Left ventricle myocardium inferior (tissue), 1 donor: ENCODE measurements at regions of chr1 and their contacts with region 1.

Region 1: DNA sequence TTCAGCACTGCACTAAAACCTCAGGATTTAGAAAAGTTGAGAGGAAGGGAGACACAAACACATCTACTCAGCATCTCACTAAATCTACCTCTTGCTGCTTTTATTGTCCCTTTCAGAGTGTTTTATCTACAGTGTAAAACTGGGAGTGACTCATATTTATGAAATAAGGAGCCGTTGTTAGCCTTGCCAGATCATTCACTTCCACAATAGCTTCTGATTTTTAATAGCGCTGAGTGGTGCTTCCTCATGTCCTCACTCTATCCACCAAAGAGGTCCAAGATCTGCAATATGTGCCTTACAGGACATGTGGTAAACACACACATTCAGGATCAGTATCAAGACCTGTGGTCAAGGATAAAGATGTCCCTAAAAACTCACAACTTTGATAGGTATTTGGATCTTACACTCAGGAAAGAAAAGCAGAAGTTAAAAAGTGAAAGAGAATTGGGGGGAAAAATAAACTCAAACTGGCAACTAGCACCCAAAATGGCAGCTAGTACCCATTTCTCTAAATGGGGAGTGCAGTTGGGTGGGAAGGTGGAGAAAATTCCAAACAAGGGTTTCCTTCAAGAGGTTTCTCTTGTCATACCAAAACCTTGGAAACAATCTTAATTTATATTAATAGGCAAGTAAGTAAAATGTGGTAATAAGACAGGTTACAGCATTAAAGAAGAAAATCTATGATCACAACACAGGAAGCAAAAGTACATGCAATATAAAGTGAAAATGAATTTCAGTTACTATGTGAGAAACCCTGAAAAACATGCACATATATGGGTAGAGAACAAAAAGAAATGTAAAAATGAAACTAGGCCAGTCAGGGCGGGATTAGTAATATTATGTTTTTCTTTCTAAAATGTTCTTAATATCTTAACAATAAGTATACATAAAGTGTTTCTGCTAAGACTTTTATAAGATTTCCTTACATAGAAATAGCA is 15.9 kb downstream of the DUSP10 start:
- DNase-seq: no peak
- H3K4me3 ChIP-seq: no peak overlapping the region
- H3K27ac ChIP-seq: peak overlapping the region; percentile 33
- H3K4me1 ChIP-seq: peaks cover 71% of the 10 kb centered on the region
- H3K27me3 ChIP-seq: no peaks in the 10 kb centered on the region
- CTCF ChIP-seq: no peak

Region 2: DNA sequence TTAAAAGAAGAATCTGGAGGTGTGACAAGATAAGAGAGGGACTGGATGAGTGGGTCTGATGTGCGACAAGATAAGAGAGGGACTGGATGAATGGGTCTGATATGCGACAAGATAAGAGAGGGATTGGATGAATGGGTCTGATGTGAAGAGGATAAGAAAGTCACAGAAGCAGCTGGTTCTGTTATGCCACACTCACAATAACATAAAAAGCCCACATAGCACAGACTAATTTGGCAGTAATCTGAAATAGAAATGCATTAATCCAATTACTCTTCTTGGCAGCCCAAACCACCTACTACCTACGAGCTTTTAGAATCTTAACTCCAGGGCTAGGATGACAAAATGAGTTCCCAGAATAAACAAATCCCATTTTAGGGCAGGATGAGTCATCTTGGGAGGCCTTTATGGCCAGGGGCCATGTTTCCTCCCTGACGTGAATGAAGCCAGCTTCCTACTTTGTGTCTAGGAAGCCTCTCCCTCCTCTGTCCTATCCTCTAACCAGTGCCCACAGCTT is 113.7 kb before region 1 on chr1:
- intact Hi-C with region 1: no loop called
- DNase-seq: peak; percentile 59
- H3K4me3 ChIP-seq: no peak overlapping the region
- H3K27ac ChIP-seq: no peak overlapping the region
- H3K4me1 ChIP-seq: peaks cover 12% of the 10 kb centered on the region
- H3K27me3 ChIP-seq: no peaks in the 10 kb centered on the region
- CTCF ChIP-seq: no peak

Region 3: GRCh38 chr1:221667504-221667903 is 58.5 kb before region 1 on chr1:
- intact Hi-C with region 1: loop called (anchors 10 kb)
- DNase-seq: no peak
- H3K4me3 ChIP-seq: no peak overlapping the region
- H3K27ac ChIP-seq: no peak overlapping the region
- H3K4me1 ChIP-seq: no peaks in the 10 kb centered on the region
- H3K27me3 ChIP-seq: peaks cover 10% of the 10 kb centered on the region
- CTCF ChIP-seq: no peak